Naive thymus-derived CD4-positive, alpha-beta T cell (primary cell): ENCODE measurements at regions of chr2 and their contacts with region 1.

Region 1: GRCh38 chr2:157492189-157492773 is 48.4 kb upstream of the CYTIP start:
- DNase-seq: peak; percentile 41 to 79 (median 68)
- ATAC-seq: peak; percentile 91
- H3K4me3 ChIP-seq: no peak overlapping the region
- H3K4me3 Mint-ChIP-seq: peak overlapping the region in 6 of 10 donors; percentile 1 to 39 (median 14)
- H3K27ac ChIP-seq: no peak overlapping the region
- H3K27ac Mint-ChIP-seq: peak overlapping the region in 3 of 9 donors; percentile 9 to 19 (median 13)
- H3K4me1 ChIP-seq: peaks cover 0 to 21% of the 10 kb centered on the region in 2 donors
- H3K4me1 Mint-ChIP-seq: peaks cover 10 to 67% (median 59%) of the 10 kb centered on the region in 7 donors
- H3K27me3 ChIP-seq: no peaks in the 10 kb centered on the region
- H3K27me3 Mint-ChIP-seq: no peaks in the 10 kb centered on the region

Region 2: DNA sequence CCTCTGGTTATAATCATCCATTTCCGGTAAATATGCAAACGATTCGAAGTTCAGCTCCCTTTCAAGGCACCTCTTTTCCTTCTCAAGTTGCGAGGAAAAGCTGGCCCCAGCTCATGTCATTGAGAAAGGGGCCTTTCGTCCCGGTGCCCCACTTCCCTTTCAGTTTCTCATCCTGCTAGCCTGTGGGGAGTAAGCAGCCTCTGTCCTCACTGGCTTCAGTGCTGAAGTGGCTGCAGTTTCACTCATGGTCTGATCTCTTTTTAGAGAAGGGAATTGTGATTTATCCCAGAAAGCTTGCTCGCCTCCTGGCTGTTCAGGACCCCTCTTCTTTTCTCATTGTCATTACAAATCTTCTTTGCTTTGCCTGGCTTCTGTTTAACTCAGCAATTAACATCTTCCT is 1367.3 kb before region 1 on chr2:
- CTCF ChIA-PET with region 1: no interaction called
- POLR2A ChIA-PET with region 1: no interaction called
- intact Hi-C with region 1: no loop called
- DNase-seq: no peak
- ATAC-seq: no peak
- H3K4me3 ChIP-seq: no peak overlapping the region
- H3K4me3 Mint-ChIP-seq: no peak overlapping the region
- H3K27ac ChIP-seq: no peak overlapping the region
- H3K27ac Mint-ChIP-seq: no peak overlapping the region
- H3K4me1 ChIP-seq: no peaks in the 10 kb centered on the region
- H3K4me1 Mint-ChIP-seq: no peaks in the 10 kb centered on the region
- H3K27me3 ChIP-seq: no peaks in the 10 kb centered on the region
- H3K27me3 Mint-ChIP-seq: peaks cover 0 to 17% (median 10%) of the 10 kb centered on the region in 5 donors

Region 3: DNA sequence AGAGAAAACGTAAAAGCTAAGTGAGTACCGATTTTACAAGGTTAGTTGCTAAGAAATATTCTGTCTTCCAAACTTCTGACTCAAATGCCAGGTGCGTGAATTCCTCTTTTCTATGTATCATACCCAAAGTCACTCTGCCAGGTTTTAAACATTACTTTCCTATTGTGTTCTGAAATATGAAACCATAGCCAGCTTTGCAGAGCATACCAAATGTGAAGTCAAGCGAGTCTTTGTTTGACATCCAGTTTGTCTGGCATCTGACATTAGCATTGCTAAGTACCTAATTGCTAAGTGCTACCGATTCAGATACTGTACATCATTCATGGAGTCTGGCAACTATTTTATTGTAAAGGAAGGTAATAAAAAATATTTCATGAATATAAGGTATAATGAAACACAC is 556.6 kb before region 1 on chr2:
- CTCF ChIA-PET with region 1: no interaction called
- POLR2A ChIA-PET with region 1: no interaction called
- intact Hi-C with region 1: no loop called
- DNase-seq: no peak
- ATAC-seq: no peak
- H3K4me3 ChIP-seq: no peak overlapping the region
- H3K4me3 Mint-ChIP-seq: no peak overlapping the region
- H3K27ac ChIP-seq: no peak overlapping the region
- H3K27ac Mint-ChIP-seq: no peak overlapping the region
- H3K4me1 ChIP-seq: no peaks in the 10 kb centered on the region
- H3K4me1 Mint-ChIP-seq: no peaks in the 10 kb centered on the region
- H3K27me3 ChIP-seq: no peaks in the 10 kb centered on the region
- H3K27me3 Mint-ChIP-seq: no peaks in the 10 kb centered on the region

Region 4: GRCh38 chr2:157480182-157480961 is 11.9 kb before region 1 on chr2:
- CTCF ChIA-PET with region 1: interaction called, 10 read pairs
- POLR2A ChIA-PET with region 1: interaction called, 7 read pairs
- intact Hi-C with region 1: loop called in 1 of 2 experiments (anchors 1 kb)
- DNase-seq: peak in 1 of 9 donors; percentile 62
- ATAC-seq: peak; percentile 46
- H3K4me3 ChIP-seq: no peak overlapping the region
- H3K4me3 Mint-ChIP-seq: peak overlapping the region; percentile 11 to 86 (median 50)
- H3K27ac ChIP-seq: no peak overlapping the region
- H3K27ac Mint-ChIP-seq: peak overlapping the region in 7 of 9 donors; percentile 21 to 95 (median 84)
- H3K4me1 ChIP-seq: peaks cover 0 to 25% of the 10 kb centered on the region in 2 donors
- H3K4me1 Mint-ChIP-seq: peaks cover 22 to 81% (median 53%) of the 10 kb centered on the region in 7 donors
- H3K27me3 ChIP-seq: no peaks in the 10 kb centered on the region
- H3K27me3 Mint-ChIP-seq: no peaks in the 10 kb centered on the region

Region 5: DNA sequence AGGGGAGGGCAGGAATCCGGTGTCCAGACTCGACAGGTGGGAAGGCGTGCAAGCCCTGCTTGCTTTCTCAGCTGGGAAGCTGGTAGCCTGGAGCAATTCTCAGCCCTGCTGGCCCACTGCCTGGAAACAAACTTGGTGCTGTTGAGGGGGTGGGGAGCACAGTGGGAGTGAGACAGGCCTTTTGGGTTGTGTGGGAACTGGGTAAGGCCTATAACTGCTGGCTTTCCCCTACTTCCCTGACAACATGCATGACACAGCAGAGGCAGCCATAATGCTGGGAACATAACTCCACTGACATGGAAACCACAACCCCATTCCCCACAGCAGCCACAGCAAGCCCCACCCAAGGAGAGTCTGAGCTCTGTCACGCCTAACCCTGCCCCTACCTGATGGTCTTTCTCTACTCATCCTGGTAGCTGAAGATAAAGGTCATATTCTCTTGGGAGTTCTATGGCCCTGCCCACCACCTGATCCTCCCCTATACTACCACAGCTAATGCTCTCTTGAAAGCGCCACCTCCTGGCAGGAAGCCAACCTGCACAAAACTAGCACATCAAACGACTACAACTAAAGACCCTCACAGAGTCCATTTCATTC is 259.3 kb after region 1 on chr2:
- CTCF ChIA-PET with region 1: no interaction called
- POLR2A ChIA-PET with region 1: interaction called, 3 read pairs
- intact Hi-C with region 1: loop called in 1 of 2 experiments (anchors 1 kb)
- DNase-seq: peak in 5 of 9 donors; percentile 8 to 23 (median 13)
- ATAC-seq: no peak
- H3K4me3 ChIP-seq: no peak overlapping the region
- H3K4me3 Mint-ChIP-seq: no peak overlapping the region
- H3K27ac ChIP-seq: no peak overlapping the region
- H3K27ac Mint-ChIP-seq: no peak overlapping the region
- H3K4me1 ChIP-seq: no peaks in the 10 kb centered on the region
- H3K4me1 Mint-ChIP-seq: peaks cover 0 to 36% (median 3%) of the 10 kb centered on the region in 7 donors
- H3K27me3 ChIP-seq: no peaks in the 10 kb centered on the region
- H3K27me3 Mint-ChIP-seq: no peaks in the 10 kb centered on the region

Region 6: GRCh38 chr2:157967856-157968255 is 475.6 kb after region 1 on chr2:
- CTCF ChIA-PET with region 1: no interaction called
- POLR2A ChIA-PET with region 1: no interaction called
- intact Hi-C with region 1: no loop called
- DNase-seq: no peak
- ATAC-seq: no peak
- H3K4me3 ChIP-seq: no peak overlapping the region
- H3K4me3 Mint-ChIP-seq: no peak overlapping the region
- H3K27ac ChIP-seq: no peak overlapping the region
- H3K27ac Mint-ChIP-seq: no peak overlapping the region
- H3K4me1 ChIP-seq: no peaks in the 10 kb centered on the region
- H3K4me1 Mint-ChIP-seq: peaks cover 0 to 3% (median 0%) of the 10 kb centered on the region in 7 donors
- H3K27me3 ChIP-seq: no peaks in the 10 kb centered on the region
- H3K27me3 Mint-ChIP-seq: peaks cover 0 to 23% (median 0%) of the 10 kb centered on the region in 5 donors

Region 7: DNA sequence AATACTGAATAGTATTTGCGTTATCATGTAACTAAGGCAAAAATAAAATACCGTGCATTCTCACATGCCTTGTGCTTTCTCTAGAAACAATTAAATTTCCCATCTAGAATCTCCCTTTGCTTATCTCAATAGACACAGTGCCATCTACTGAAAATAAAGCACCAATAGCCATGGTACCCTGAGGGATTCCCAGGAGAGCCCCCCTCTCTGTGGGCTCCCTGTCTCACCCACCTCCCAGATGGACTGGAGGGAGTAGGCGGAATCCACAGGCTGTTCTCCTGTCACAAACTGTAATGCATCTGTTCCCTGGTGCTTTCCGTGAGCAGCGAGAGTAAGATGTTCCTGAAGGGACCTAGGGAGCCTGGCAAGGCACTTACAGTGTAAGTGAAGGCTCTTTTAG is 496.9 kb after region 1 on chr2:
- CTCF ChIA-PET with region 1: no interaction called
- POLR2A ChIA-PET with region 1: no interaction called
- intact Hi-C with region 1: loop called in 1 of 2 experiments (anchors 1 kb)
- DNase-seq: no peak
- ATAC-seq: no peak
- H3K4me3 ChIP-seq: no peak overlapping the region
- H3K4me3 Mint-ChIP-seq: no peak overlapping the region
- H3K27ac ChIP-seq: no peak overlapping the region
- H3K27ac Mint-ChIP-seq: no peak overlapping the region
- H3K4me1 ChIP-seq: no peaks in the 10 kb centered on the region
- H3K4me1 Mint-ChIP-seq: no peaks in the 10 kb centered on the region
- H3K27me3 ChIP-seq: no peaks in the 10 kb centered on the region
- H3K27me3 Mint-ChIP-seq: peaks cover 0 to 13% (median 5%) of the 10 kb centered on the region in 5 donors